Activated CD4-positive, alpha-beta memory T cell treated with anti-CD3 and anti-CD28 coated beads for 36 hours (primary cell): ENCODE measurements at regions of chrX and their contacts with region 1.

Region 1: DNA sequence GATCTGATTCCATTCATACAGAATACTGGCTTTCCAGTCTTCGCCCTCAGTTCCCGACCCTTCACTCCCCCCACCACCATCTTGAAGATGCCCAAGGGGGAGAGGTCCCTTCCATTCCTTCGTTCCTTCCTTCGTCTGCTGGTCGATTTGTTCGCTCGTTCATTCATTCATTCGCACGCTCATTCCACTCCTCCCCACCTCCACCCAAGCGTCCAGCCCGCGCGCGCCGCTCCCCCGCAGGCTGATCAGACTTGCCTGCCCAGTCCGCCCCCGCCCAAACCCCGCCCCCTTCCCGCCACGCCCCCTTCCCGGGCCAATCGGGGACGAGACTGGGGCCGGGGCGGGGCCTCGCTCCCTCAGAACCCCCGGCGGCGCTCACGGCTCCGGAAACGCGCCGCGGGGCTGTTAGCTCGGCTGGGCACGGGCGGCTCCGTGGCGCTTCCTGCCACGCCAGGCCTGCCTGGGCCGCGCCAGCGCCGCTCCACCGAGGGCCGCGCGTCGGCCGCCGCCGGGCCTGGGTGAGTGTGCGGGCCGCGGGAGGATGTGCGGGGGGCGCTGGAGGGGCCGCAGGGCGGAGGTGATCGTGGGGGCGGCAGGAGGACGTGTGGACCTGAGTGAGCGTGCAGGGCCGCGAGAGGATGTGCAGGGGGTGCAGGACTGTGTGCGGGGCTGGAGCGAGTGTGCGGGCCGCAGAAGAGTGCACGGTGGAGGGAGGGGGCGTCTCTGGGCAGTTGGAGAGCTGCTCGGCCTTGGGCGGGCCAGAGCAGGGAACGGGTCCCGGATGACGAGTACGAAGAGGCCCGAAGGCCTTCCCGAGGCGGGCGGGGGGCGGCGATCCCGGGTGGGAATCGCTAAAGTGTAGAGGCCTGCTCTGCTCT is at the start of gene ZNF275:
- DNase-seq: peak; percentile 86
- H3K4me3 Mint-ChIP-seq: peak within 1 kb of the TSS; percentile 83
- H3K27ac Mint-ChIP-seq: peak within 1 kb of the TSS; percentile 65
- H3K4me1 Mint-ChIP-seq: peaks cover 39% of the 10 kb centered on the region
- H3K27me3 Mint-ChIP-seq: no peaks in the 10 kb centered on the region
- total RNA-seq, gene ZNF275: 11.3 to 11.5 TPM

Region 2: GRCh38 chrX:153370293-153371055 is 36.5 kb after region 1 on chrX:
- CTCF ChIA-PET with region 1: no interaction called
- POLR2A ChIA-PET with region 1: no interaction called
- intact Hi-C with region 1: loop called (anchors 1 kb)
- DNase-seq: peak; percentile 36
- H3K4me3 Mint-ChIP-seq: no peak overlapping the region
- H3K27ac Mint-ChIP-seq: peak overlapping the region; percentile 7
- H3K4me1 Mint-ChIP-seq: peaks cover 21% of the 10 kb centered on the region
- H3K27me3 Mint-ChIP-seq: peaks cover 3% of the 10 kb centered on the region